GM12878 (cell line): ENCODE measurements at regions of chr6 and their contacts with region 1.

Region 1: DNA sequence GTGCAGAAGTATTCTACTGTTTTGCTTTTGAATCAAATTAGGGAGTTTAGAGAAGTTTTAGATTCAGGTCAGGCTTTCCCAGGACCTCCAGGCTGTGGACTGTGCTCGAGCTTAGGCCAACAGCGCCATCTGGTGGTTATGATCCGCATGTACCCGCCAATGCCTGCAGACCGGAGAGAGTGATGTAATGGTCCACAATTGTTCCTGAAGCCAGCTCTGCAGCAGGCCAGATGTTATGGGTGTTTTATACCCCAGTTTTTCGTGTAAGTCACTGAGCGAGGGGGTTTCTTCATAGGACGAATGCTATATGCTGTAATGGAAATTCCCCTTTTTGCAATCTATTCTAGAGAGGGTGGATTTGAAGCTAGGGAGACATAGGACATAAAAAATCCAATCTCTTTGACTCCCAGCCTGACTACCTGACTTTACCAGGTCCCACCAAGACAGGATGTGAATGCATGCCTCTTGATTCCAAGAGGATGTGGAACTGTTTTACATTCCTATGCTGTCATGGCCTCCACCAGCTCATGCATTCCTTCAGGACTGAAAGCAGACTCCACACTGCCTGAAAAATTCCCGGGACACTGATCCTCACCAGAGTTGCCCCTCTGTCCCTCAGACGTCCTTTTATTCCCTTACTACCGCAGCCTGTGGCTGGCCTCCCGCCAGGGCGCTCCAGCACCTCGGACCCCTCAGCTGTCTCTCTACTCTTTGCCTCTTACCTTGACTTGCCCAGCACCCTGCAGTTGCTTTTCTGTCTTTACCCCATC is 41.2 kb upstream of the LY86 start:
- DNase-seq: peak; percentile 79
- ATAC-seq: peak; percentile 85
- H3K4me3 ChIP-seq: peak overlapping the region; percentile 46; the same call in 1 of the 2 replicates
- H3K27ac ChIP-seq: peak overlapping the region; percentile 80
- H3K4me1 ChIP-seq: peaks cover 43% of the 10 kb centered on the region
- H3K27me3 ChIP-seq: no peaks in the 10 kb centered on the region
- CTCF ChIP-seq: peak; percentile 86 to 98 (median 91); a peak in 5 of 6 replicates
- EP300 ChIP-seq: no peak
- POLR2A ChIP-seq: no peak
- RAD21 ChIP-seq: peak; percentile 89

Region 2: GRCh38 chr6:5422321-5422915 is 1124.9 kb before region 1 on chr6:
- CTCF ChIA-PET with region 1: no interaction called
- POLR2A ChIA-PET with region 1: no interaction called
- RAD21 ChIA-PET with region 1: no interaction called
- SMC1A ChIA-PET with region 1: no interaction called
- in situ Hi-C with region 1: no loop called
- intact Hi-C with region 1: loop called (anchors 5 kb)
- DNase-seq: no peak
- ATAC-seq: peak; percentile 75
- H3K4me3 ChIP-seq: no peak overlapping the region
- H3K27ac ChIP-seq: no peak overlapping the region
- H3K4me1 ChIP-seq: no peaks in the 10 kb centered on the region
- H3K27me3 ChIP-seq: no peaks in the 10 kb centered on the region
- CTCF ChIP-seq: peak; percentile 46 to 50 (median 50); a peak in 4 of 6 replicates
- EP300 ChIP-seq: no peak
- POLR2A ChIP-seq: no peak
- RAD21 ChIP-seq: peak; percentile 53

Region 3: GRCh38 chr6:6105472-6106036 is 441.7 kb before region 1 on chr6:
- CTCF ChIA-PET with region 1: interaction called, 31 read pairs
- POLR2A ChIA-PET with region 1: no interaction called
- RAD21 ChIA-PET with region 1: interaction called, 15 read pairs
- SMC1A ChIA-PET with region 1: interaction called, 32 read pairs
- in situ Hi-C with region 1: no loop called
- intact Hi-C with region 1: loop called (anchors 1 kb)
- DNase-seq: no peak
- ATAC-seq: peak; percentile 92
- H3K4me3 ChIP-seq: no peak overlapping the region
- H3K27ac ChIP-seq: no peak overlapping the region
- H3K4me1 ChIP-seq: no peaks in the 10 kb centered on the region
- H3K27me3 ChIP-seq: no peaks in the 10 kb centered on the region
- CTCF ChIP-seq: peak; percentile 14 to 44 (median 40); a peak in 4 of 6 replicates
- EP300 ChIP-seq: no peak
- POLR2A ChIP-seq: no peak
- RAD21 ChIP-seq: peak; percentile 47

Region 4: GRCh38 chr6:6390849-6391602 is 156.3 kb before region 1 on chr6:
- CTCF ChIA-PET with region 1: interaction called, 20 read pairs
- POLR2A ChIA-PET with region 1: interaction called, 4 read pairs
- RAD21 ChIA-PET with region 1: interaction called, 54 read pairs
- SMC1A ChIA-PET with region 1: interaction called, 28 read pairs
- in situ Hi-C with region 1: loop called (anchors 5 kb)
- intact Hi-C with region 1: loop called (anchors 1 kb)
- DNase-seq: peak; percentile 78
- ATAC-seq: peak; percentile 74
- H3K4me3 ChIP-seq: peak overlapping the region; percentile 40
- H3K27ac ChIP-seq: peak overlapping the region; percentile 96
- H3K4me1 ChIP-seq: peaks cover 37% of the 10 kb centered on the region
- H3K27me3 ChIP-seq: no peaks in the 10 kb centered on the region
- CTCF ChIP-seq: no peak
- EP300 ChIP-seq: peak; percentile 40 to 71; a peak in 3 of 4 replicates
- POLR2A ChIP-seq: peak; percentile 40; the same call in 1 of the 2 replicates
- RAD21 ChIP-seq: peak; percentile 21; the same call in 1 of the 2 replicates

Region 5: DNA sequence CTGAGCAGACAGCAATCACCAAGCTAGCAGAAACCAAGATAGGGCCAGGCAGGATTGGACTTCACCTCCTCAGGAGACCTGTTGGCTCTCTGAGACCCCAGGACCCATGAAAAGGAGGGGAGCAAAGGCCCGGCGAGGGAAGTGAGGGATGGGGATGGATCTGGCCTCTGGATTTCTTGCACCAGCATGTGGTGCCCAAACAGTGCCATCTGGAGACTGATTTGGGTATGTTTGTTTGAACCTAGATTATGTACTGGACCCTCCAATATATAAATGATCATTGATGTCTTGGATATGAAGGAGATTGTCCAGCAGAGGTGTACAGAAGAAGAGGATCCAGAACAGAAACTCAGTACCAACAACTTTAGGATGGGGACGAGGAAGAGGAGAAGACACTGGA is 42.2 kb before region 1 on chr6:
- CTCF ChIA-PET with region 1: interaction called, 7 read pairs
- POLR2A ChIA-PET with region 1: interaction called, 3 read pairs
- RAD21 ChIA-PET with region 1: interaction called, 11 read pairs
- SMC1A ChIA-PET with region 1: interaction called, 6 read pairs
- in situ Hi-C with region 1: no loop called
- intact Hi-C with region 1: no loop called
- DNase-seq: no peak
- ATAC-seq: no peak; the same call in 2 of the 3 replicates
- H3K4me3 ChIP-seq: no peak overlapping the region
- H3K27ac ChIP-seq: no peak overlapping the region
- H3K4me1 ChIP-seq: no peaks in the 10 kb centered on the region; the same call in 1 of the 2 replicates
- H3K27me3 ChIP-seq: no peaks in the 10 kb centered on the region
- CTCF ChIP-seq: no peak
- EP300 ChIP-seq: no peak
- POLR2A ChIP-seq: no peak
- RAD21 ChIP-seq: 0 out of 2 replicates have a peak, but pooled peaks have one; percentile 16

Region 6: GRCh38 chr6:6577736-6578135 is 30.4 kb after region 1 on chr6:
- CTCF ChIA-PET with region 1: interaction called, 39 read pairs
- POLR2A ChIA-PET with region 1: no interaction called
- RAD21 ChIA-PET with region 1: interaction called, 37 read pairs
- SMC1A ChIA-PET with region 1: interaction called, 9 read pairs
- in situ Hi-C with region 1: no loop called
- intact Hi-C with region 1: no loop called
- DNase-seq: no peak
- ATAC-seq: peak; percentile 33; the same call in 1 of the 3 replicates
- H3K4me3 ChIP-seq: no peak overlapping the region
- H3K27ac ChIP-seq: no peak overlapping the region
- H3K4me1 ChIP-seq: peaks cover 4% of the 10 kb centered on the region; the same call in 1 of the 2 replicates
- H3K27me3 ChIP-seq: no peaks in the 10 kb centered on the region
- CTCF ChIP-seq: no peak
- EP300 ChIP-seq: no peak
- POLR2A ChIP-seq: no peak
- RAD21 ChIP-seq: 0 out of 2 replicates have a peak, but pooled peaks have one; percentile 14